ENCODE measurements at regions of chr2 and their contacts with region 1.

Region 1: GRCh38 chr2:46634905-46635304 is 155.5 kb downstream of the TMEM247 start:
- DNase-seq: no peak
- H3K4me3 ChIP-seq: no peak overlapping the region
- H3K27ac ChIP-seq: no peak overlapping the region
- H3K4me1 ChIP-seq: no peaks in the 10 kb centered on the region
- H3K27me3 ChIP-seq: no peaks in the 10 kb centered on the region
- CTCF ChIP-seq: no peak

Region 2: GRCh38 chr2:46690825-46691224 is 55.9 kb after region 1 on chr2:
- intact Hi-C with region 1: no loop called
- DNase-seq: no peak
- H3K4me3 ChIP-seq: no peak overlapping the region
- H3K27ac ChIP-seq: no peak overlapping the region
- H3K4me1 ChIP-seq: no peaks in the 10 kb centered on the region
- H3K27me3 ChIP-seq: no peaks in the 10 kb centered on the region
- CTCF ChIP-seq: no peak

Region 3: GRCh38 chr2:46893269-46893945 is 258.5 kb after region 1 on chr2:
- intact Hi-C with region 1: loop called (anchors 5 kb)
- DNase-seq: no peak
- H3K4me3 ChIP-seq: no peak overlapping the region
- H3K27ac ChIP-seq: peak overlapping the region; percentile 42
- H3K4me1 ChIP-seq: peaks cover 4% of the 10 kb centered on the region
- H3K27me3 ChIP-seq: no peaks in the 10 kb centered on the region
- CTCF ChIP-seq: no peak